ENCODE measurements at regions of chrX and their contacts with region 1.

Region 1: GRCh38 chrX:17046478-17047097 is 100.1 kb downstream of the REPS2 start:
- DNase-seq: peak in 4 of 6 donors; percentile 48 to 72 (median 57)
- ATAC-seq: peak; percentile 85 to 98 (median 96)
- H3K4me3 ChIP-seq: no peak overlapping the region
- H3K27ac ChIP-seq: no peak overlapping the region
- H3K4me1 ChIP-seq: no peaks in the 10 kb centered on the region
- H3K27me3 ChIP-seq: peaks cover 0 to 5% (median 0%) of the 10 kb centered on the region in 4 donors
- CTCF ChIP-seq: peak; percentile 57 to 79 (median 69)

Region 2: GRCh38 chrX:16756724-16757123 is 289.9 kb before region 1 on chrX:
- intact Hi-C with region 1: no loop called
- DNase-seq: no peak
- ATAC-seq: no peak
- H3K4me3 ChIP-seq: no peak overlapping the region
- H3K27ac ChIP-seq: no peak overlapping the region
- H3K4me1 ChIP-seq: no peaks in the 10 kb centered on the region
- H3K27me3 ChIP-seq: no peaks in the 10 kb centered on the region
- CTCF ChIP-seq: no peak

Region 3: GRCh38 chrX:16839852-16840460 is 206.6 kb before region 1 on chrX:
- intact Hi-C with region 1: loop called in 1 of 3 experiments (anchors 10 kb)
- DNase-seq: no peak
- ATAC-seq: peak in 1 of 4 donors; percentile 11
- H3K4me3 ChIP-seq: no peak overlapping the region
- H3K27ac ChIP-seq: no peak overlapping the region
- H3K4me1 ChIP-seq: no peaks in the 10 kb centered on the region
- H3K27me3 ChIP-seq: no peaks in the 10 kb centered on the region
- CTCF ChIP-seq: no peak

Region 4: GRCh38 chrX:16882702-16883486 is 163.7 kb before region 1 on chrX:
- intact Hi-C with region 1: loop called in 2 of 3 experiments (anchors 10 kb)
- DNase-seq: peak; percentile 44 to 81 (median 59)
- ATAC-seq: peak; percentile 76 to 90 (median 86)
- H3K4me3 ChIP-seq: peak overlapping the region; percentile 7 to 39 (median 28)
- H3K27ac ChIP-seq: peak overlapping the region; percentile 5 to 70 (median 36)
- H3K4me1 ChIP-seq: no peaks in the 10 kb centered on the region
- H3K27me3 ChIP-seq: peaks cover 0 to 9% (median 6%) of the 10 kb centered on the region in 4 donors
- CTCF ChIP-seq: peak in 3 of 4 donors; percentile 24 to 43 (median 37)

Region 5: DNA sequence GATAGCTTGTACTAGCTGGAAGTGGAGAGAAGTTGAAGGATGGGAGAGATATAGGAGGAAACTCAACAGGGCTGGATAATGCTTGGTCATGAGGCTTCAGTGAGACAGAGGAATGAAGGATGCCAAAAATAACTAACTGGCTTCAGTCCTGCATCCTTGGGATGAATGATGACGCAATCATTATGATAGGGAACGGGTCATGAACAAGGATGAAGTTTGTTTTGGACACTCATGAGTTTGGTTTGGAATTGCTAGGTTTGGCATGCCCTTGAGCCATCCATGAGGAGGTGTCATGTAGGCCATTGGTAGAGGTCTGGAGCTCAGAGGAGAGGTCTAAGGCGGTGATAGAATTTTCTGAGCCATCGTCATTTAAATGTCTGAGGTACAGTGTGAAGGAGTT is 168.4 kb after region 1 on chrX:
- intact Hi-C with region 1: no loop called
- DNase-seq: no peak
- ATAC-seq: no peak
- H3K4me3 ChIP-seq: no peak overlapping the region
- H3K27ac ChIP-seq: no peak overlapping the region
- H3K4me1 ChIP-seq: no peaks in the 10 kb centered on the region
- H3K27me3 ChIP-seq: no peaks in the 10 kb centered on the region
- CTCF ChIP-seq: no peak

Measured in pancreas (tissue), 10 donors.